PC-9 (cell line): ENCODE measurements at regions of chr7 and their contacts with region 1.

Region 1: DNA sequence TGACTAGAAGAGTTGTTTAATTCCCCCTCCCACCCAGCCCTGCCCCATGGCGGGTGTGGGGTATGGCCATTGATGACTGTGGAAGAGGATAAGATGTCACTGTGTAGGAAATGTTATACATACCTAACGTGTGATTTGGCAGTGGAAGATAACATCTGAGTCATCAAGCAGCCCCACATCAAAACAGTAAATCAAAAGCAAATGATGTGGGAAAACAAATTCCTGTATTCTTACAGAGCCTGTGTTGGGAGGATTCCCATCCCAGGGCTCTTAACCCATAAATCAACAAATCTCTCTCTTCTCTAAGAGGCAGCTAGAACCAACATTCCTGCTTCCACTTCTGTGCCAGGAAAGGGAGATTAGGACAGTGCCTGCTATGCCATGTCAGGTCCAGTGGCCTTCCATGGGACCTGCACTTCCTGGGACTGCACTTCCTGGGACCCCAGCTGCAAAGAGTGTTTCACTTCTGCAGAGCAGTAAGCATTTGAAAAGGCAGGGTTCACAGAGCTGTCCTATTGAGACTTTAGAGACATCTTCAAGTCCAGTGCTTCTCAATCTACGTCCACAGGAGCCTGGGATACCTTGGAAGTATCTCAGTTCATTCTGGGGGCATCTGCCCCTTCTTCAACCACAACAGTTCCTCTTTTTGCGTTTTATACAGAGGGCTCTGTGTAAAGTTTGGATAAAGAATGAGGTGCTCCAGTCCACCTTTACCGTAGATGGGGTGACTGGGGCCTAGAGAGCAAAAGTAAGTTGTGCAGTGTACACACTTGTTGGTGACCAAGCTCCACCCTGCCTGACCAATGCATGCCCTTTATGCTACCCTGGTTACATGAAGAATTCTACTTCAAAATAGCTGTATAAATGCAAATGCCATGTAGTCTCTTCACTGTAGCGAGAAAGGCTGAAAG is 45.8 kb downstream of the ATXN7L1 start:
- DNase-seq: peak; percentile 78 to 97
- H3K4me3 ChIP-seq: no peak overlapping the region
- H3K27ac ChIP-seq: peak overlapping the region; percentile 35
- H3K4me1 ChIP-seq: peaks cover 39% of the 10 kb centered on the region
- H3K27me3 ChIP-seq: no peaks in the 10 kb centered on the region
- CTCF ChIP-seq: no peak

Region 2: GRCh38 chr7:105769901-105770628 is 60.6 kb before region 1 on chr7:
- CTCF ChIA-PET with region 1: no interaction called
- POLR2A ChIA-PET with region 1: no interaction called
- intact Hi-C with region 1: loop called (anchors 1 kb)
- DNase-seq: peak; percentile 58 to 93
- H3K4me3 ChIP-seq: no peak overlapping the region; the same call in 1 of the 2 replicates
- H3K27ac ChIP-seq: peak overlapping the region; percentile 45
- H3K4me1 ChIP-seq: peaks cover 28% of the 10 kb centered on the region
- H3K27me3 ChIP-seq: no peaks in the 10 kb centered on the region
- CTCF ChIP-seq: no peak

Region 3: DNA sequence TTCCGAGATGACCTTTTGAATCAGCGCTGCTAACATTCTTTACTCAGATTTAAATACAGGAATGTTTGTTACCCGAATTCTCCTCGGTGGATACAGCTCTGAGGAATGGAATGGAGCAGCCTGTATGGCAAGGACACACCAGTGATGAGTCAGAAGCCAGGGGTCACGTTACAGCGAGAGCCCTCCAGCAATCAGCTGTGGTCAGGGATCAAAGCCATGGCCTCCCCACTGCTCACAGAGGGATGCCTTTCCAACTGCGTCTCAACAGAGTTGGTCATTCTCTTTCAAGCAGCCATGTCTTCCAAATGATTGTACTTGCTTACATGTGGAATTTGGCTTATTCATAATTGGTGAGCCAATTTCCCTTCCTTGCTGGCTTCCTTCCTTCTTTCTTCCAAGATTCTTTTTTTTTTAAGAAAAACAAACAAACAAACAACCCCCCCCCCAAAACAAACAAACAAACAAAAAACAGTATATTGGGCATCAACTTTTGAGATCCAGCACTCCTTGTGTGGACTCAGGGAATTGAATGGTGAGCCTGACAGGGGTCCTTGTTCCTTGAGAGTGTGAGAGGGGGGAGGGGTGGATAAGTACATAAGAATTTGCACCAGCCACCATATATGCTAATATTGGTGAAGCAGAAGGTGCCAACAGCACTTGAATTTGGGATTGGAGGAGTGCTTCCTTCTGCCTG is 54.4 kb before region 1 on chr7:
- CTCF ChIA-PET with region 1: no interaction called
- POLR2A ChIA-PET with region 1: no interaction called
- intact Hi-C with region 1: loop called (anchors 1 kb)
- DNase-seq: peak; percentile 96 to 99
- H3K4me3 ChIP-seq: no peak overlapping the region
- H3K27ac ChIP-seq: peak overlapping the region; percentile 87
- H3K4me1 ChIP-seq: peaks cover 33% of the 10 kb centered on the region
- H3K27me3 ChIP-seq: no peaks in the 10 kb centered on the region
- CTCF ChIP-seq: no peak

Region 4: GRCh38 chr7:105790996-105791395 is 39.6 kb before region 1 on chr7:
- CTCF ChIA-PET with region 1: no interaction called
- POLR2A ChIA-PET with region 1: no interaction called
- intact Hi-C with region 1: loop called (anchors 1 kb)
- DNase-seq: peak; percentile 83 to 85
- H3K4me3 ChIP-seq: no peak overlapping the region
- H3K27ac ChIP-seq: no peak overlapping the region
- H3K4me1 ChIP-seq: peaks cover 66% of the 10 kb centered on the region
- H3K27me3 ChIP-seq: no peaks in the 10 kb centered on the region
- CTCF ChIP-seq: no peak

Region 5: GRCh38 chr7:105849122-105849855 is 18.6 kb after region 1 on chr7:
- CTCF ChIA-PET with region 1: no interaction called
- POLR2A ChIA-PET with region 1: no interaction called
- intact Hi-C with region 1: loop called (anchors 1 kb)
- DNase-seq: peak; percentile 83
- H3K4me3 ChIP-seq: no peak overlapping the region
- H3K27ac ChIP-seq: peak overlapping the region; percentile 44
- H3K4me1 ChIP-seq: peaks cover 21% of the 10 kb centered on the region
- H3K27me3 ChIP-seq: no peaks in the 10 kb centered on the region
- CTCF ChIP-seq: no peak